A549 (cell line): ENCODE measurements at regions of chr1 and their contacts with region 1.

Region 1: GRCh38 chr1:110780600-110781484 is 92.1 kb upstream of the CD53 start:
- DNase-seq: peak; percentile 40 to 71
- ATAC-seq: peak; percentile 74 to 80; a peak in 4 of 6 replicates
- H3K4me3 ChIP-seq: no peak overlapping the region
- H3K27ac ChIP-seq: no peak overlapping the region
- H3K4me1 ChIP-seq: no peaks in the 10 kb centered on the region
- CTCF ChIP-seq: peak; percentile 57
- EP300 ChIP-seq: no peak
- POLR2A ChIP-seq: no peak
- RAD21 ChIP-seq: peak; percentile 51 to 53

Region 2: GRCh38 chr1:110630839-110631663 is 149.8 kb before region 1 on chr1:
- CTCF ChIA-PET with region 1: interaction called, 28 read pairs
- POLR2A ChIA-PET with region 1: no interaction called
- DNase-seq: peak; percentile 53 to 58
- ATAC-seq: peak; percentile 93 to 99
- H3K4me3 ChIP-seq: no peak overlapping the region
- H3K27ac ChIP-seq: no peak overlapping the region
- H3K4me1 ChIP-seq: no peaks in the 10 kb centered on the region
- CTCF ChIP-seq: peak; percentile 58
- EP300 ChIP-seq: no peak
- POLR2A ChIP-seq: no peak
- RAD21 ChIP-seq: peak; percentile 52 to 59